Right ventricle myocardium inferior (tissue), 1 donor: ENCODE measurements at regions of chr7 and their contacts with region 1.

Region 1: GRCh38 chr7:78769481-78770101 is 683.9 kb downstream of the MAGI2 start:
- DNase-seq: no peak
- ATAC-seq: no peak

Region 2: GRCh38 chr7:78020136-78020873 is 749.3 kb before region 1 on chr7:
- intact Hi-C with region 1: loop called (anchors 10 kb)
- DNase-seq: no peak
- ATAC-seq: peak; percentile 79

Region 3: DNA sequence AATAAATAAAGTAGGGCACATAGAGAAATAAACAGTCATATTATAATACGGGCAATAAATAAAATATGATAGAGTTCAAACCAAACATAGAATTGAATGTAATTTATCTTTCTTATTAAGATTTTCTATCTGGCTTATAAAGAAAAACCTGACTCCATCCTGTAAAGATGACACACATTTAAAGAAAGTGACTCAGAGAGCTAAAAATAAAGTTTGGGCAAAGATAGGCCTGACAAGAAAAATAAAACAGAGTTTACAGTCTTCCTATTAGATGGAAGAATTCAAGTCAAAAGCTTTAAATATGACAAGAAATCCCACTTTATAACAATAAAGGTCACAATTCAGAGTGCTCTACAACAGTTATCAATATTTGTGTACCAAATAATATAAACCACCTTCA is 390.4 kb before region 1 on chr7:
- intact Hi-C with region 1: loop called (anchors 10 kb)
- DNase-seq: no peak
- ATAC-seq: no peak

Region 4: DNA sequence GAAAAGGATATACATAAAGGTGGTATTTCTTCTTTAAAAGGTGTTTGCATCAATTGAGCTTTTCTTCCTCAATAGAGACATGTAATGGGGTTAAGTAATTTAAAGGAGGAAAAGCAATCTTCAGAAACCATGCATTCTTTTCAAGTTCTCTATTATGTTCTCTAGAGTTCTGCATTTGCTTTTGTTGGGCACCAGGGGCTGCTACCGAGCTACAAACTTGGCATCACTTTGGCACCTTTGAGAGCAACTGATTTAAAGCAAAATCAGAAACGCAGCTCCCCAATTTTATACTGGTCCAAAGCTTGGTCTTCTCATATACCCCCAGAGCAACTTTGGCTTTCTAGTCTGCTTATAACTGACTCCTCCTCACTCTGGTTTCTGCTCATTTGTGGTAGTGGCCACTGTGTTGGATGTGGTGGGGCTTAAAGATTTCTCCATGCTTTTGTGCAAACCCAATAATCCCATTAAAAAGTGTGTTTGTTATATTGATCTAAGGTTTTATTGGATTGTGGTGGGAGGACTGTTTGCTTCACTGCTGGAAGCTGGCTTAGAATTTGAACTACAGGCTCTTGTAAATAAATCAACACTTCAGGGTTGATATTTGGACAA is 258.9 kb before region 1 on chr7:
- intact Hi-C with region 1: loop called (anchors 10 kb)
- DNase-seq: no peak
- ATAC-seq: no peak

Region 5: DNA sequence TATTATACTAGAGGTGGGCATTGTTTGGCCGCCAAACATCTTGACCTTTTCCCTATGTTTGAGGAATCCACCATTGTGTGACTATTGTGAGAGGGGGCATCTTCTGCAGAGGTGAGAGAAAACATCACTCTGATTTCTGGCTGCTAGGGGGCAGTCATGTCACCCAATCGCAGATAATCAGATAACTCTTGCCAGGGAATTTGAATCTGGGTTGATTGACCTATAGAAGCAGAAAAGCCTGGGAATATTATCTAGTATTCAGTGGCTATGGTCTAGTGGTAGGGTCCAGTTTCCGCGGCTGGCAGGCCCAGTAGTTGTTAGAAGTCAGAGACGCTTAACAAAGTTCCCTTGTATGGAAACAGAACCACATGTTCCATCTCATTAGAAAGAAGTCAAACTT is 162.5 kb before region 1 on chr7:
- intact Hi-C with region 1: loop called (anchors 10 kb)
- DNase-seq: no peak
- ATAC-seq: no peak

Region 6: DNA sequence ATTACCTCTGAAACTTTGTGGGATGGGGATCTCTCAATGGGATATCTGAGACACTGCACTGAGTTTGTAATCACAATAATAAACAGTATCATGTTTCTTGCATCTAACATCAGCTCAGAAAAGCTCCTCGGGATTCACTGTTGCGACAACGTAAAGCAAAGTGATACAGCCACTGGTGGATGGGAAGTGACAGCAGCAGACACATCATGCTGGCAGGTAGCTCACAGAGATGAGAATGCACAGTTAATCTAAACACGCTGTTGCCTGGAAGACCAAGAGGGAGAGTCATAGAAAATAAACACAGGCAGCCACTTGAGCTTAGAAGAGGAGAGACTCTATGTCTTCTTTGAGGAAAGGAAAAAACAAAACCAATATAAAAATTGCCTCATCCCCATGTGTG is 170.1 kb after region 1 on chr7:
- intact Hi-C with region 1: no loop called
- DNase-seq: no peak
- ATAC-seq: no peak